ENCODE measurements at regions of chr15 and their contacts with region 1.

Region 1: DNA sequence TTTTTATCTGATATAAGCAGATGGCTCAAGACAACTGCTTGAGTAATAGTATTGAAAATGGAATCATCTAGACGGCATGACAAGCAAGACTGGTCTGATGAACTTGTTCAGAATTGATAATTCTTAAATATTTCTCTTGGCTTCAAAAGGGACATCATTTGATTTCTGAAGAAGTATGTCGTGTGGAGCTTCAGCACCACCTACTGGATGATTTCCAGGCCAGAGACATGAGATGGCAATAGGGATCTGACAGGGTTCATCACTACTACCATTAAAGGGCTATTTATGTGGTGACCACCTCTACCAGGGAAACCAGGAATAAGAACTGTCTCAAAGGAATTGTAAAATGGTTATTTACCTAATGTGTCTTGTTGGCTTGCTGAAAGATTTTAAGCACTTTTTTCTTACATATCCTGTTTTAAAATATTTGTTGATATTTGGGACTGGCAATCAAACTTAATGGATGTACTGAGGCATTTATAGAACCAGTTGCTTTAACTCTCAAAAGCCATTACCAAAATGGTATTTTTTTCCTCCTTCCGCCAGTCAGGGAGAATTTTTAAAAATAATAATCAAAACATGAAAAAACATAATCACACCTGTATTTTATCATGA is 99.5 kb upstream of the FAM98B start:
- DNase-seq: peak; percentile 49
- H3K4me3 ChIP-seq: no peak overlapping the region
- H3K27ac ChIP-seq: no peak overlapping the region
- H3K4me1 ChIP-seq: no peaks in the 10 kb centered on the region
- H3K27me3 ChIP-seq: no peaks in the 10 kb centered on the region
- CTCF ChIP-seq: peak; percentile 17 to 76 (median 68)
- POLR2A ChIP-seq: no peak

Region 2: GRCh38 chr15:37995461-37996347 is 358.7 kb before region 1 on chr15:
- intact Hi-C with region 1: loop called (anchors 5 kb)
- DNase-seq: no peak
- H3K4me3 ChIP-seq: no peak overlapping the region
- H3K27ac ChIP-seq: no peak overlapping the region
- H3K4me1 ChIP-seq: no peaks in the 10 kb centered on the region
- H3K27me3 ChIP-seq: no peaks in the 10 kb centered on the region
- CTCF ChIP-seq: peak in 3 of 4 experiments; percentile 35 to 52 (median 43)
- POLR2A ChIP-seq: no peak

Region 3: DNA sequence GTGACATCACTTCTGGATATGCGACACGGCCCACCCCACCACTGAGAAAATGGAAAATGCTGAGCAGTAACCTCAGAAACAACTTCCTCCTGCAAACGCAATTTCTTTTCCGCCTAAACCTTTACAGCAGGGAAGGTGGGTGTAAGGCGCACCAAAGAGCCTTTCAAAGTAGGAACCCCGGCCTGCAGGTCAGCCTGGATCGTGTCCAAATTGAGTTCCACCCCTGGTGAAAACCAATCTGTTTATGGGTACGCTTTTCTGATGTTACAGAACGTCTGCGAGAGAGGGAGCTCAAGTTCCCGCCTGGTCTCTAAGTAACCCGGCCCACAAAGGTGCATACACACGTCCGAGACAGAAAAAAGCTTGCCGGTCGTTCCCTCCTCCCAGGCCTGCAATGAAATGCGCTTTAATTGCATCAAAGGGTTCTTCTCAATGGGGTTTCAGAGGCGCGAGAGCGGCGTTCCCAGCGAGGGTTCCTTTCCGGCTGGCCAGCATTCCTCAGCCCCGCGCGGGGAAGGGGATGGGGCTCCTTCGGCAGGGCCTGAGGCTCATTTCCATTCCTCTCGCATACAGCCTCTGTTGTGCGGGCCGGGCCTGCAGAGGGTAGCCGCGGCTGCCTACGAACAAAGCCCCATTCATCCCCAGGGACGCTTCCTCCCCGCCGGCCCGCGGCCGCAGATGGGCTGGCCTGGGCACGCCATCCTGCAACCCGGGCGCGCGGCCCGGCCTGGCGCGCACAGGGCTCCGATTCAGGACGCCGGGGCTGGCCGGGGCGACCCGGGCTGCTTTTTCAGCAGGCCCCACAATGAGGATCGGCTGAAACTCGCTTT is 281.9 kb before region 1 on chr15:
- intact Hi-C with region 1: loop called (anchors 10 kb)
- DNase-seq: peak; percentile 69
- H3K4me3 ChIP-seq: peak overlapping the region; percentile 36 to 42
- H3K27ac ChIP-seq: peak overlapping the region; percentile 80 to 88
- H3K4me1 ChIP-seq: no peaks in the 10 kb centered on the region
- H3K27me3 ChIP-seq: no peaks in the 10 kb centered on the region
- CTCF ChIP-seq: peak in 1 of 4 experiments; percentile 5
- POLR2A ChIP-seq: no peak

Region 4: GRCh38 chr15:38252481-38253412 is 101.7 kb before region 1 on chr15 and contains the start of gene SPRED1:
- intact Hi-C with region 1: loop called (anchors 5 kb)
- DNase-seq: peak; percentile 67
- H3K4me3 ChIP-seq: peak within 1 kb of the TSS; percentile 86 to 94
- H3K27ac ChIP-seq: peak within 1 kb of the TSS; percentile 93 to 97
- H3K4me1 ChIP-seq: no peaks in the 10 kb centered on the region
- H3K27me3 ChIP-seq: no peaks in the 10 kb centered on the region
- CTCF ChIP-seq: no peak
- POLR2A ChIP-seq: no peak
- total RNA-seq, gene SPRED1: 9.5 to 13.3 TPM